ENCODE measurements at regions of chr1 and their contacts with region 1.

Region 1: DNA sequence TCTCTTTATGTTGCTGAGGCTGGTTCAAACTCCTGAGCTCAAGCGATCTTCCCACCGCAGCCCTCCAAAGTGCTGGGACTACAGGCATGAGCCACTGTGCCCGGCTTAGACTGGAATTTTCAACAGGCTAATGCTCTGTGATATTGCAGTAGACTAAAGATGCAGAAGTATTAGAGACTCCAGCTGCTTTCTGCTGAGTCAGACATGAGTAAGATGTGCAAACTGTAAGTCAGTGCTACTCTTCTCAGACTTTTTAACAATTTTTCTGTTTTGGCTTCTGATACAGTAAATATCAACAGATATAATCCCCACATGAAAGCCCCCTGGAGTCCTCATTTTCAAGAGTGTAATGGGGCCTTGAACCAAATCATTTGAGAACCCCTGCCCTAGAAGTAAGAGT is 29.3 kb upstream of the NLRP3 start:
- DNase-seq: no peak
- H3K4me3 ChIP-seq: no peak overlapping the region
- H3K27ac ChIP-seq: no peak overlapping the region
- H3K4me1 ChIP-seq: peaks cover 0 to 9% (median 3%) of the 10 kb centered on the region in 4 donors
- H3K27me3 ChIP-seq: peaks cover 0 to 8% (median 0%) of the 10 kb centered on the region in 3 donors
- CTCF ChIP-seq: no peak
- EP300 ChIP-seq: no peak
- POLR2A ChIP-seq: no peak

Region 2: DNA sequence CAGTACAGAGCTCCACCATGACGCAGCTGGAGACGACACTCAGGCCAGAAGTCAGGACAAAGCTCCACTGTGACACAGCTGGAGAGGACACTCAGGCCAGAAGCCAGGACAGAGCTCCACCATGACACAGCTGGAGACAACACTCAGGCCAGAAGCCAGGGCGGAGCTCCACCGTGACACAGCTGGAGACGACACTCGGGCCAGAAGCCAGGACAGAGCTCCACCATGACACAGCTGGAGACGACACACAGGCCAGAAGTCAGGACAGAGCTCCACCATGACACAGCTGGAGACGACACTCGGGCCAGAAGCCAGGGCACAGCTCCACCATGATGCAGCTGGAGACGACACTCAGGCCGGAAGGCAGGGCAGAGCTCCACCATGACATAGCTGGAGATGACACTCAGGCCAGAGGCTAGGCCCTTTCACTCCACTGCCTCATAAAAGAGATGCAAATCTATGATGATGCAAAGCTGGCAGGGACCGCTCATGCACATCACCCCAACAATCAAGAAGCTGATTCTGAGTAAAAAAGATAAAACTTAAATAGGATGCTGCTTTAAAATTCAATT is 84.8 kb after region 1 on chr1:
- intact Hi-C with region 1: loop called (anchors 10 kb)
- DNase-seq: no peak
- H3K4me3 ChIP-seq: no peak overlapping the region
- H3K27ac ChIP-seq: no peak overlapping the region
- H3K4me1 ChIP-seq: no peaks in the 10 kb centered on the region
- H3K27me3 ChIP-seq: no peaks in the 10 kb centered on the region
- CTCF ChIP-seq: no peak
- EP300 ChIP-seq: no peak
- POLR2A ChIP-seq: no peak

Region 3: GRCh38 chr1:247506831-247507230 is 120.1 kb after region 1 on chr1:
- intact Hi-C with region 1: no loop called
- DNase-seq: no peak
- H3K4me3 ChIP-seq: no peak overlapping the region
- H3K27ac ChIP-seq: no peak overlapping the region
- H3K4me1 ChIP-seq: no peaks in the 10 kb centered on the region
- H3K27me3 ChIP-seq: no peaks in the 10 kb centered on the region
- CTCF ChIP-seq: no peak
- EP300 ChIP-seq: no peak
- POLR2A ChIP-seq: no peak

Measured in stomach (tissue), 19 donors.